ENCODE measurements at regions of chr1 and their contacts with region 1.

Region 1: DNA sequence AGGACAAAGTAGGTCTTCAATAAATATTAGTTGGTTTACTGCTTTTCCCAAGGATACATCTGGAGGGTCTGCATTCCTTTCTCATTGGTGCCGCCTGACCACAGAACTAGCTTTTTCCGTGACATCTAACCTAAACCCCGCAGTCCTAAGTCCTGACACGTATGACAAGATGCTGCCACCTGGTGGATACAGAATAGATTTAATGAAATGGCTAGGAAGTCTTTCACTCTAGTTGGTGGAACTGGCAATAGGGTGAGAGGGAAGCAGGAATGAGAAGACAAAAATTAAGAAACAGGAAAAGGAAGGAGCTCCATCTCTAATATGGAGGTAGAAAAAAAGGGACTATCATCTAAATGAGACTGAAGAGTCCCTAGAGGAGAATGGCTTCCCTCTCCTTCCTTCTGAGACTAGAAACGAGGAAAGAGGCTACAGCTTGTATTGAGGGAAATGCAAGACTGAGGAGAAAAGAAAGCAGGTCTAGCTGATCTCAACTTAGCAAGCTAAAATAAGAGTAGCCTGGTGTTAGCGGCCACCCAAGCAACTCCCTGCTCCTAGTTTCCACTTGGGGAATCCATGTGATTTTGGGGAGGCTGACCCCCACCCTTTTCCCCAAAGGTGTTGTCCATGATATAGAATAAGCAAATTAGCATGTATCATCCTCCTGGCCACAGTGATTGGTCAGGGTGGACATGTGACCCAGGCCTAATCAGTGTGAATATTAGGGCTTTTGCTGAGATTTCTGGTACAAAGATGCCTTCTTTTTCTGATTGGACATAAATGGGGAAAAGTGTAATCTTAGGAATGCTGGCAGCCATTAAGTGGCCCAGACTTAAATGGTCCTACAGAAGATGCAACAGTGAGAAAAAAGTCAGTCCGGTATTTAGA is 5.9 kb downstream of the RFX5 start:
- DNase-seq: peak; percentile 60 to 84
- ATAC-seq: peak; percentile 87 to 93
- H3K4me3 ChIP-seq: no peak overlapping the region
- H3K27ac ChIP-seq: no peak overlapping the region
- H3K4me1 ChIP-seq: peaks cover 9% of the 10 kb centered on the region
- CTCF ChIP-seq: peak; percentile 87
- EP300 ChIP-seq: no peak
- POLR2A ChIP-seq: no peak
- RAD21 ChIP-seq: peak; percentile 84 to 87

Region 2: GRCh38 chr1:151281969-151282882 is 58.9 kb before region 1 on chr1 and contains the start of gene ZNF687:
- CTCF ChIA-PET with region 1: interaction called, 16 read pairs
- POLR2A ChIA-PET with region 1: no interaction called
- DNase-seq: peak; percentile 100
- ATAC-seq: peak; percentile 89 to 96
- H3K4me3 ChIP-seq: peak within 1 kb of the TSS; percentile 75
- H3K27ac ChIP-seq: peak within 1 kb of the TSS; percentile 90 to 92
- H3K4me1 ChIP-seq: peaks cover 13% of the 10 kb centered on the region
- CTCF ChIP-seq: no peak
- EP300 ChIP-seq: no peak
- POLR2A ChIP-seq: peak; percentile 64
- RAD21 ChIP-seq: no peak
- polyA plus RNA-seq, gene ZNF687: 14.0 and 14.3 TPM in 2 replicates

Region 3: GRCh38 chr1:151352006-151352689 is 11.0 kb after region 1 on chr1:
- CTCF ChIA-PET with region 1: interaction called, 108 read pairs
- POLR2A ChIA-PET with region 1: no interaction called
- DNase-seq: peak in 1 of 2 experiments; percentile 23
- ATAC-seq: no peak
- H3K4me3 ChIP-seq: no peak overlapping the region
- H3K27ac ChIP-seq: no peak overlapping the region
- H3K4me1 ChIP-seq: peaks cover 7% of the 10 kb centered on the region
- CTCF ChIP-seq: no peak
- EP300 ChIP-seq: no peak
- POLR2A ChIP-seq: no peak
- RAD21 ChIP-seq: no peak

Region 4: DNA sequence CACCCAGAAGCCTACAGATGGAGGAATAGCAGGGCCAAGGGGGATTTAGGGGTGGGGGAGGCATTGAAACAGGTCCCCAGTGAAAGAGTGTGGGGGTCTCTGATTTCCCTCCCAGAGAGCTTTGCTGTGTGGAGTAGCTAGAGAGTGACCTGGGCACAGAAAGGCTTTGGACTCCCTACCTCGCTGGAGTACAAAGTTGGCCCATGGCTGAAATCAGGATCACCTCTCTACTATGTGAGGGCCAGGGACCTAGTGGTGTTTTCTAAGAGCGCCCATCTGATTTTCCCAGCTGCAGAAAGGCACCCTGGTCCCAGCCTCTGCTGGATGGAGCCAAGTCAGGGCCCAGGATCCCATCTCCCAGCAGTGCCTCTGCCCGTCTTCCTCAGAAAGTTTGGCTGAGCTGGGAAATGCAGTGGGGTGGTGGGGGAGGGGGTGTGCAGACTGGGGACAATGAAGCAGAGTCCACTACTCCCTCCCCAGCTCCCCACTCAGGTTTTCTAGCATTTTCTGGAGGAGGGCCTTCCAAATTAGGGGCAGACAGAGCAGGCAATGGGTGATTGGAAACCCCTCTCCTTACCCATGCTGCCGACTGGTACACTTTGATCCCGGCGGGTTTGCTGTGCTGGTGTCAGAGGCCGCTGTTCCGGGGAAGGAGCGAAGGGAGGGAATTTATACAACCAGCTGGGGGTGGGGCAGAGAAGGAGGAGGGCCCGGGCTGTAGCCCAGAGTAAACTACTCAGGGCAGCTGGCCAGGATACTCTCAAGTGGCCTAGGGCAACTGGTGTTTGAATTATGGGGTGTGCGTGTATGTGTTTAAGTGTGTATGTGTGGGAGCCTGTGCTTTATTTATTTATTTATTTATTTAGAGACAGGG is 31.2 kb after region 1 on chr1 and contains the start of gene SELENBP1:
- CTCF ChIA-PET with region 1: interaction called, 17 read pairs
- POLR2A ChIA-PET with region 1: no interaction called
- DNase-seq: peak; percentile 48 to 68
- ATAC-seq: peak; percentile 60 to 79
- H3K4me3 ChIP-seq: peak within 1 kb of the TSS; percentile 32
- H3K27ac ChIP-seq: peak within 1 kb of the TSS; percentile 64 to 78
- H3K4me1 ChIP-seq: peaks cover 37% of the 10 kb centered on the region
- CTCF ChIP-seq: no peak
- EP300 ChIP-seq: no peak
- POLR2A ChIP-seq: peak; percentile 51
- RAD21 ChIP-seq: no peak
- polyA plus RNA-seq, gene SELENBP1: 28.6 and 35.4 TPM in 2 replicates

Region 5: GRCh38 chr1:151399890-151400495 is 58.9 kb after region 1 on chr1:
- CTCF ChIA-PET with region 1: interaction called, 32 read pairs
- POLR2A ChIA-PET with region 1: no interaction called
- DNase-seq: no peak
- ATAC-seq: peak; percentile 26 to 46; a peak in 4 of 6 replicates
- H3K4me3 ChIP-seq: peak overlapping the region; percentile 69
- H3K27ac ChIP-seq: peak overlapping the region; percentile 84 to 95
- H3K4me1 ChIP-seq: peaks cover 16% of the 10 kb centered on the region
- CTCF ChIP-seq: no peak
- EP300 ChIP-seq: no peak
- POLR2A ChIP-seq: no peak
- RAD21 ChIP-seq: no peak

Region 6: GRCh38 chr1:151447696-151448095 is 106.6 kb after region 1 on chr1:
- CTCF ChIA-PET with region 1: no interaction called
- POLR2A ChIA-PET with region 1: no interaction called
- DNase-seq: no peak
- ATAC-seq: no peak
- H3K4me3 ChIP-seq: no peak overlapping the region
- H3K27ac ChIP-seq: no peak overlapping the region
- H3K4me1 ChIP-seq: peaks cover 20% of the 10 kb centered on the region; the same call in 2 of the 3 replicates
- CTCF ChIP-seq: no peak
- EP300 ChIP-seq: no peak
- POLR2A ChIP-seq: no peak
- RAD21 ChIP-seq: no peak

Region 7: DNA sequence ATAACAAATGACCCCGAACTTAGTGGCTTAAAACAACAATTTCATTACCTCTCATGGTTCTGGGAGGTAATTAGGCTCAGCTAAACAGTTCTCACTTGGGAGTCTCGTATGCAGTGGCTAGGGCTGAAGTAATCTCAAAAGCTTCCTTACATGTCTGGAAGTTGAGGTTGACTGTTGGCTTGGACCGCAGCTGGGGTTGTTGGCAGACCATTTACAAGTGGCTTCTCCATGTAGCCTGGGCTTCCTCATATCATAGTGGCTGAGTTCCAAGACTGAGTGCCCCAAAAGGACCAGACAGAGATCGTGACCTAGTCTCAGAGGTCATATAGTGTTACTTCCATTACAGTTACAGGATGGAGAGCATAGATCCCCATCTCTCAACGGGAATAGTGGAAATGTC is 120.6 kb after region 1 on chr1:
- CTCF ChIA-PET with region 1: no interaction called
- POLR2A ChIA-PET with region 1: no interaction called
- DNase-seq: no peak
- ATAC-seq: no peak
- H3K4me3 ChIP-seq: no peak overlapping the region
- H3K27ac ChIP-seq: no peak overlapping the region
- H3K4me1 ChIP-seq: peaks cover 14% of the 10 kb centered on the region
- CTCF ChIP-seq: no peak
- EP300 ChIP-seq: no peak
- POLR2A ChIP-seq: no peak
- RAD21 ChIP-seq: no peak

Measured in A549 (cell line).